PC-3 (cell line): ENCODE measurements at regions of chr3 and their contacts with region 1.

Region 1: GRCh38 chr3:161423911-161424522 is 52.7 kb upstream of the SPTSSB start:
- DNase-seq: peak; percentile 86
- ATAC-seq: peak; percentile 16; the same call in 1 of the 2 replicates
- H3K4me3 ChIP-seq: no peak overlapping the region
- H3K27ac ChIP-seq: peak overlapping the region; percentile 96
- H3K4me1 ChIP-seq: peaks cover 51% of the 10 kb centered on the region
- H3K27me3 ChIP-seq: no peaks in the 10 kb centered on the region
- CTCF ChIP-seq: peak; percentile 77

Region 2: DNA sequence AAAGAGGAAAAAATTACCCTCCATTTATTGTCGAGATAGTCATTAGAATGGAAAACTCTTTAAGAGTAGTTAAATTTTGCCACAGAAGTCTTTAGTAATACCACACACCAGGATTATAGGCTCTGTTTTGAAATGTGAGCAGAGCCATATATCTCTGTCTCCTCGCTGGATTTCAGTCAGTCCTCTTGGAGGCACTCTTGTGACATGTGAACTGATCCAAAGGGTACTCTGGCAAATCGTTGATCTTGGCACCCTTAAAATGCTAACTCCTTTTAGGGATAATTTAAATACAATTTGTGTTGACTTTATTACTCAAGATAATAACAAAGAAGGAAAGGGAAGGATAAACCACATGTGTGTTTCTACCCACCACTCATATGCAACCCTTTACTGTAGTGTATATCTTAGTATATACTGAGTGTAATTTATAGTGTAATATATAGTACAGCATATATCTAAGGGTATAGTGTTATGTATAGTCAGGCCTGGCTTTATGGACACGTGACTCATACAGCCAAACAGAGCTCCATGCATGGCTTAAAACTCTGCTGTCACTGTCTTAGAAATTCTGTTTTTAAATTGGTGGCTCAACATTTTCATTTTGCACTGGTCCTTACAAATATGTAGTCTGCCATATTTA is 846.3 kb before region 1 on chr3:
- CTCF ChIA-PET with region 1: no interaction called
- POLR2A ChIA-PET with region 1: no interaction called
- intact Hi-C with region 1: loop called (anchors 5 kb)
- DNase-seq: peak; percentile 85
- ATAC-seq: peak; percentile 98
- H3K4me3 ChIP-seq: no peak overlapping the region
- H3K27ac ChIP-seq: no peak overlapping the region
- H3K4me1 ChIP-seq: peaks cover 11% of the 10 kb centered on the region
- H3K27me3 ChIP-seq: no peaks in the 10 kb centered on the region
- CTCF ChIP-seq: peak; percentile 90

Region 3: GRCh38 chr3:160921020-160921635 is 502.9 kb before region 1 on chr3:
- CTCF ChIA-PET with region 1: no interaction called
- POLR2A ChIA-PET with region 1: no interaction called
- intact Hi-C with region 1: loop called (anchors 5 kb)
- DNase-seq: peak; percentile 75
- ATAC-seq: peak; percentile 94
- H3K4me3 ChIP-seq: no peak overlapping the region
- H3K27ac ChIP-seq: no peak overlapping the region
- H3K4me1 ChIP-seq: no peaks in the 10 kb centered on the region
- H3K27me3 ChIP-seq: no peaks in the 10 kb centered on the region
- CTCF ChIP-seq: peak; percentile 95

Region 4: DNA sequence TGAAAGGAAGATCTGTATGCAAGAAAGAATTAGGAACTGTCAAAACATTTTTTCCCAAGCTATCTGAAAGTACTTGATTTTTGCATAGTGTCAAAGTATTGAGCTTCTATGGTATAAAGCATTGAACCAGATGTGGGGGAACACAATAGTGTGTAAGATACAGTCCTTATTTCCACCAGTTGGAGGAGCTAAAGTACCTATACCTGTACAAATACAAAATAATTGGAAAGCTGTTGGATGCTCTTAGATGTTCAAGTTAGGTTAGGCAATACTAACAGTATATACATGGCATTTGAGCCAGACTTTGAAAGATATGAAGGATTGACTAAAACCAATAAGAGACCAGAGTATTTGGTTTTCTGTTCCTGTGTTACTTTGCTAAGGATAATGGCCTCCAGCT is 467.2 kb before region 1 on chr3:
- CTCF ChIA-PET with region 1: no interaction called
- POLR2A ChIA-PET with region 1: no interaction called
- intact Hi-C with region 1: loop called (anchors 2 kb)
- DNase-seq: peak; percentile 74
- ATAC-seq: peak; percentile 92
- H3K4me3 ChIP-seq: no peak overlapping the region
- H3K27ac ChIP-seq: no peak overlapping the region
- H3K4me1 ChIP-seq: no peaks in the 10 kb centered on the region
- H3K27me3 ChIP-seq: no peaks in the 10 kb centered on the region
- CTCF ChIP-seq: peak; percentile 86

Region 5: DNA sequence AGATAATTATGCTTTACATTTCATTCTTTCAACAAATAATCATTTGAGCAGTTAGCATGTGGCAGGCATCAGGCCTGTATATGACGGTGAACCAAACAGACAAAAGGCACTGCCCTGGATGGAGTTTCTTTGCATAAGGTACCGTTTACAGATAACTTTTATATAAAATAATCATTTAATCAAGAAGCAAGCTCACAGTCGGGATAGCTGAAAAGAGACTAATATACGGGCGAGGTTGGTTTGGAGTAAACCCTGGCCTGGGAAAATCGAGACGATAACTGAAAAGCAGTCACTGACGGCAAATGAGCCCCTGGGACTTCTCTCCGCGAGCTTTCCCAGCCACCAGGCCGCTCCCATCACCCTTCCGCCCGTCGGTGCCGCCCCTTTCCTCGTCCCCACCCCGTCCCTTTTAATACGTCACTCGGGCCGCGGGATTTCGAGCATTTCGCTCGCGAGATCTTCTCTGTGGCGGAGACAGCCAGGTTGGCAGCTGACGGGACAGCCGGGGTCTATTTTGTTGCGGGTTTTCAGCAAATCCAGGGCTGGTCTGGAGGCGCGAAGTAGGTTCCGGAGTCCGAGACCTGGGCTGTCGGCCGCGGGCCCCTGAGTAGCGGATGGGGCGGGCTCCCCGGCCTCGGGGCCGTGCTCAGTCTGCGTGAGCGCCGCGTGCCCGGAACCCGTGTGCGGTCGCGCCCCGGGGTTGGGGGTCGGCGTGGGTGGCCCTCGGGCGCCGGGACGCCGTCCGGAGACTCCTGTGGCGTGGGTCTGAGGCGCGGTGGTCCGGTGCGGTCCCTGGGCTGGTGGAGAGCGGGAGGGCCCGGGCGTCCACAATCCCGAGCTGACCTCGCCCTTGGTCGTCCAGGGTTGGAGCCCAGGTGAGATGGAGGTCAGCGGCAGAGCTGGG is 202.9 kb before region 1 on chr3 and contains the start of gene NMD3:
- CTCF ChIA-PET with region 1: no interaction called
- POLR2A ChIA-PET with region 1: no interaction called
- intact Hi-C with region 1: loop called (anchors 5 kb)
- DNase-seq: peak; percentile 98
- ATAC-seq: peak; percentile 80
- H3K4me3 ChIP-seq: peak within 1 kb of the TSS; percentile 96
- H3K27ac ChIP-seq: peak within 1 kb of the TSS; percentile 72
- H3K4me1 ChIP-seq: peaks cover 41% of the 10 kb centered on the region
- H3K27me3 ChIP-seq: no peaks in the 10 kb centered on the region
- CTCF ChIP-seq: no peak
- total RNA-seq, gene NMD3: 65.3 and 72.6 TPM in 2 replicates

Region 6: GRCh38 chr3:161371430-161372326 is 52.3 kb before region 1 on chr3 and contains the start of gene SPTSSB:
- CTCF ChIA-PET with region 1: no interaction called
- POLR2A ChIA-PET with region 1: interaction called, 5 read pairs
- intact Hi-C with region 1: loop called (anchors 1 kb)
- DNase-seq: peak; percentile 96
- ATAC-seq: peak; percentile 76
- H3K4me3 ChIP-seq: peak within 1 kb of the TSS; percentile 76
- H3K27ac ChIP-seq: peak within 1 kb of the TSS; percentile 98
- H3K4me1 ChIP-seq: peaks cover 25% of the 10 kb centered on the region
- H3K27me3 ChIP-seq: no peaks in the 10 kb centered on the region
- CTCF ChIP-seq: peak; percentile 64
- total RNA-seq, gene SPTSSB: 78.0 and 144 TPM in 2 replicates

Region 7: GRCh38 chr3:161444006-161444693 is 20.1 kb after region 1 on chr3:
- CTCF ChIA-PET with region 1: no interaction called
- POLR2A ChIA-PET with region 1: no interaction called
- intact Hi-C with region 1: no loop called
- DNase-seq: peak; percentile 77
- ATAC-seq: peak; percentile 94
- H3K4me3 ChIP-seq: no peak overlapping the region; the same call in 1 of the 2 replicates
- H3K27ac ChIP-seq: peak overlapping the region; percentile 66
- H3K4me1 ChIP-seq: peaks cover 22% of the 10 kb centered on the region
- H3K27me3 ChIP-seq: no peaks in the 10 kb centered on the region
- CTCF ChIP-seq: no peak